HEK293 (cell line): ENCODE measurements at regions of chr6 and their contacts with region 1.

Region 1: GRCh38 chr6:3251462-3252314 is 7.1 kb upstream of the PSMG4 start:
- H3K4me3 ChIP-seq: no peak overlapping the region
- H3K27ac ChIP-seq: no peak overlapping the region
- H3K4me1 ChIP-seq: peaks cover 6% of the 10 kb centered on the region; the same call in 1 of the 2 replicates
- CTCF ChIP-seq: peak; percentile 83

Region 2: GRCh38 chr6:3052481-3053230 is 199.0 kb before region 1 on chr6:
- CTCF ChIA-PET with region 1: no interaction called
- POLR2A ChIA-PET with region 1: no interaction called
- H3K4me3 ChIP-seq: no peak overlapping the region
- H3K27ac ChIP-seq: no peak overlapping the region
- H3K4me1 ChIP-seq: no peaks in the 10 kb centered on the region
- CTCF ChIP-seq: no peak

Region 3: GRCh38 chr6:3124667-3125066 is 127.0 kb before region 1 on chr6:
- CTCF ChIA-PET with region 1: interaction called, 69 read pairs
- POLR2A ChIA-PET with region 1: interaction called, 5 read pairs
- H3K4me3 ChIP-seq: no peak overlapping the region
- H3K27ac ChIP-seq: no peak overlapping the region
- H3K4me1 ChIP-seq: no peaks in the 10 kb centered on the region
- CTCF ChIP-seq: no peak

Region 4: DNA sequence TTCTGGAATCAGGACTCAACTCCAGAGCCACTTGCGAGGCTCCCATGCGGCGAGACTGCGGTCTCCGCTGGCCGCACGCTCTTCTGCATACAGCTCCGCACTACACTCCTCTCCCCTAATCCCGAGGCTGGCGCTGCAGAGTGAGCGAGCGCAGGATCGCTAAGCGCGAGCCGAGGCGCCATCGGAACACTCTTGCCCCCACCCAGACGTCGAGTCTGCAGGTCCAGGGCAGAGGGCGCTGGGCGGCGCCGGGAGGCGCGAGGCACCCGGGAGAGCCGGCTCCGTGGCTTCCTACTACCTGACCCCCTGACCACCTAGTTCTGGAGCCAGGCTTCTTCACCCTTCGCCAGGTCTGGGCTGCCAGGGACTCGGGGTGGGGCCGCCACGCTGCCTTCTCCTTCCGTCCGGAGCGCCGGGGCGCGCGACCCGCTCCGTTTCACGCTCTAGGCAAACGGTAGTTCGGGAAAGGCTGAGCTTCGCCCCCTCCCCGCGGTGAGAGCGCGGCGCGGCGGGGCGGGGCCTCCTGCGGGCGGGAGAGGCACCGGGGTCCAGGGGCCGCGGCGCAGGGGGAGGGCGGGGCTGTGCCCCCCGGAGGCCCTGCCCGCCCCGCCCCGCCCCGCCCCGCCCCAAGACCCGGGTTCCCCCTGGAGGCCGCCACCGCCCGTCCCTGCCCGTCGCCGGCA is 89.0 kb before region 1 on chr6:
- CTCF ChIA-PET with region 1: interaction called, 13 read pairs
- POLR2A ChIA-PET with region 1: interaction called, 20 read pairs
- H3K4me3 ChIP-seq: peak overlapping the region; percentile 63
- H3K27ac ChIP-seq: peak overlapping the region; percentile 90
- H3K4me1 ChIP-seq: peaks cover 24% of the 10 kb centered on the region
- CTCF ChIP-seq: peak; percentile 90

Region 5: DNA sequence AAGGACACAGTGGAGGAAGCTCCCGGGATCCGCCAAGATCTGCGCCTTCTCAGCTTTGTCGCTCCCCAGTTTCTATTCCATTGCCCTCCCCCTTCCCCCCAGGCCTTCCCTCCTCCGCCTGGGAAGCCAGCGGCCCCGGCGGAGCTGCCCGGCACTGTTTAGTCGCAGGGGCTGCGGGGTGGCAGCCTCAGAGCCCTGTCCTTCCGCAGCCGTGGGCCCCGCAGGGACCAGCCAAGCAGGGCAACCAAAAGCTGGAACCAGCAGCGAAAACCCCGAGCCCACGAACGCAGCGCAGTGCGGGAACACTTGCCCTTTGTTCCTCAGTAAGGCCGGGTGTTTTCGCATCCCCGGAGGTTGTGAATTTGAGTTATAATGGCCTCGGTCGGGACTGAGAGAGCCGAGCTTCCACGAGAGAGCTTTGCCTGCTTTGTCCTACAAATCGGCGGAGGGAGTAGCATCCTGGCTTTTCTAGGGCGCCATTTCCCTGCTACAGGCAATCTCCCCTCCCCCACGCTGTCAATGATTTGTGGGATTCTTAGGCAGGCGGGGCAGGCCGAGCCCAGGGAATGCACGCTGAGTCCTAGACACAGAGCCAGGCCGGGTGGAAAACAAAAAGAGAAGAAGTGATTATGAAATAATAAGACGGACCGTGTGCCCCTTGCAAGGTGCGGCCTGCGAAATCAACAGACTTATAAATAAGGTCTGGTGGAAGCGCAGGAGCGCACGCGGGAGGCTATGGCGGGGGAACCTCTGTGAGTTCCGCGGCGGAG is 20.3 kb before region 1 on chr6:
- CTCF ChIA-PET with region 1: interaction called, 72 read pairs
- POLR2A ChIA-PET with region 1: interaction called, 26 read pairs
- H3K4me3 ChIP-seq: peak overlapping the region; percentile 71
- H3K27ac ChIP-seq: peak overlapping the region; percentile 94
- H3K4me1 ChIP-seq: peaks cover 7% of the 10 kb centered on the region; the same call in 1 of the 2 replicates
- CTCF ChIP-seq: no peak